BJ (cell line): ENCODE measurements at regions of chr2 and their contacts with region 1.

Region 1: GRCh38 chr2:28566521-28567041 is 70.7 kb downstream of the PLB1 start:
- DNase-seq: peak; percentile 16
- H3K4me3 ChIP-seq: peak overlapping the region; percentile 54
- H3K27me3 ChIP-seq: no peaks in the 10 kb centered on the region
- CTCF ChIP-seq: peak; percentile 100

Region 2: GRCh38 chr2:28511871-28512606 is 54.5 kb before region 1 on chr2:
- CTCF ChIA-PET with region 1: no interaction called
- POLR2A ChIA-PET with region 1: no interaction called
- DNase-seq: no peak
- H3K4me3 ChIP-seq: no peak overlapping the region
- H3K27me3 ChIP-seq: peaks cover 16% of the 10 kb centered on the region
- CTCF ChIP-seq: no peak

Region 3: GRCh38 chr2:28577791-28578680 is 11.5 kb after region 1 on chr2:
- CTCF ChIA-PET with region 1: interaction called, 35 read pairs
- POLR2A ChIA-PET with region 1: no interaction called
- DNase-seq: no peak
- H3K4me3 ChIP-seq: no peak overlapping the region
- H3K27me3 ChIP-seq: no peaks in the 10 kb centered on the region
- CTCF ChIP-seq: no peak

Region 4: GRCh38 chr2:28583899-28584553 is 17.4 kb after region 1 on chr2:
- CTCF ChIA-PET with region 1: interaction called, 35 read pairs
- POLR2A ChIA-PET with region 1: interaction called, 4 read pairs
- DNase-seq: peak; percentile 82
- H3K4me3 ChIP-seq: no peak overlapping the region
- H3K27me3 ChIP-seq: no peaks in the 10 kb centered on the region
- CTCF ChIP-seq: no peak

Region 5: DNA sequence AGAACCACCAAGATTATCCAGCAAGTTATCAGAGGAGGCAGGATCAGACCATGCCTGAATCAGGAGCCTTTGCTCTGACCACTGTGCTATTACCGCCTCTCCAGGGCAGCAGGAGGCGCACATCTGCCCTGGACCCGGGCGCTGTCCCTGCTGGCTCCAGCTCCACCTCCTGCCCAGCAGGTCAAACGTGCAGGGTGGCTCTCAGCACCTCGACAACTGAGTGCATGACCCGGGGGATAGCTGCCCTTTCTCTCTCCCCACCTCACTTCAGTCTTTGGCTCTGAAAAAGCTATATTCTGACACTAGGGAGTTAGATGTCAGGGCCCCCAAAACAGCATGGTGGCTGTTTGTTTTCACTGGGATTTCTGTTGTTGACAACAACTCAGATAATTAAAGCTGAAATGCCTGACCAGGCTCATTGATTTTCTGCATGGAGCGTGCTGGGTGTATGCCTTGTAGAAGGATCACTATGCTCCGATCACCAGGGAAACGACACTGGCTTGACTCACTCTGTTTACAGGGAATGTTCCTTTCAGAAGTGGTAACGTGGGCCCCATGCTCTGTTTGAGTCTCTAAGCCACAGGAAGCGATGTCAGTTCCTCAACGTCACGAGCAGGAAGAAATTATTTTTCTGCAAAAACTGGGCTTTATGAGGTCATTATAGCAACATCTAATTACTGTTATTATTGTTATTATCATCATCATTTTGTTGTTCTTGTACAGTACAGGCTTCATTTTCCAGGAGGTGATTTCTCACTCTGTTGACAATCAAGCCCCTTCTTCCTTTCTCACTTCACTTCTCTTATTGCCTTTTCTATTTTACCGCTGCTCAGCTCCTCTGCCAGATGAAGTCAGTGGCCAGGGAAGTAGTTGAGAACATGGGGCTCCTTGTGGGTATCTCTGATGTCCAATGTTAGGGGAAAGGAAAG is 54.9 kb after region 1 on chr2:
- CTCF ChIA-PET with region 1: no interaction called
- POLR2A ChIA-PET with region 1: interaction called, 11 read pairs
- DNase-seq: peak; percentile 81
- H3K4me3 ChIP-seq: no peak overlapping the region
- H3K27me3 ChIP-seq: no peaks in the 10 kb centered on the region
- CTCF ChIP-seq: peak; percentile 43

Region 6: GRCh38 chr2:28778392-28778791 is 211.8 kb after region 1 on chr2:
- CTCF ChIA-PET with region 1: interaction called, 10 read pairs
- POLR2A ChIA-PET with region 1: no interaction called
- DNase-seq: no peak
- H3K4me3 ChIP-seq: no peak overlapping the region
- H3K27me3 ChIP-seq: no peaks in the 10 kb centered on the region
- CTCF ChIP-seq: no peak

Region 7: DNA sequence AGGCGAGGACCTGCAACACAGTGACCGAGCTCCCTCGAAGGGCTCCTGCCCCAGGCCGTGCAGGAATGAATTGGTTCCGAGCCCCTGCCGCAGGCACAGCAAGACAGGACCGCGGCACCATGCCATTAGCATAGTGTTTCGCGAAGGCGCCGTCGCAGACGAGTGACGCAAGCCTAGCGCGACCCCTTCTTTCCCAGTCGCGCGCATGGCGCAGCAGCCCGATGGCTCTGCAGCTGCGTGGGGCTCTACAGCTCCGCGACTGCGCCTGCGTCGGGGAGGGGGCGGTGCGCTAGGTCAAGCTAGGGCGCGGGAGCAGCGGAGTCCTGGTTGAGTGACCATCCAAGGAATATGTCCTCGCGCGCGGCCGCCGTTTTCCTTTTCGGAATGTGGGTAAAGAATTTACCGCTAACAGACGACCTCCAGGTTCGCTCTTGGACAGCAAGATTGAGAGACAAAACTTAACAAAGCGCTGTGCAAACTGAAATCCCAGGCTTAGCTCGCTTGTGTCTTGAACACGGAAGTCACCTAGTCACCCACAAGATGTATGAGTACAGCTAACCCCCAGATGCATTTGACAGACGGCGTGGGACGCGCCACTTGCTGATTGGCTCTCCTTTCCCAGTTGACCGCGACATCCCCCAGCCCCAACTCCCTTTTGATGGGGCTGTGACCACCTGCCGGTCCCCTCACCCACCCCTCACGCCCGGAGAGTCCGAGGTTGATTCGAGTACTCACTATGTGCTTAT is 303.7 kb after region 1 on chr2 and contains the start of gene TRMT61B:
- CTCF ChIA-PET with region 1: interaction called, 11 read pairs
- POLR2A ChIA-PET with region 1: no interaction called
- DNase-seq: peak; percentile 60
- H3K4me3 ChIP-seq: peak within 1 kb of the TSS; percentile 68
- H3K27me3 ChIP-seq: no peaks in the 10 kb centered on the region
- CTCF ChIP-seq: no peak
- polyA plus RNA-seq, gene TRMT61B: 8.0 and 12.0 TPM in 2 replicates